ENCODE measurements at regions of chr4 and their contacts with region 1.

Region 1: GRCh38 chr4:153541456-153542096 is 75.4 kb downstream of the TMEM131L start:
- DNase-seq: peak; percentile 65
- ATAC-seq: peak; percentile 82
- H3K4me3 Mint-ChIP-seq: no peak overlapping the region
- H3K27ac Mint-ChIP-seq: no peak overlapping the region
- H3K4me1 Mint-ChIP-seq: peaks cover 28% of the 10 kb centered on the region
- H3K27me3 Mint-ChIP-seq: no peaks in the 10 kb centered on the region

Region 2: GRCh38 chr4:153023681-153024394 is 517.7 kb before region 1 on chr4:
- CTCF ChIA-PET with region 1: no interaction called
- DNase-seq: no peak
- ATAC-seq: no peak
- H3K4me3 Mint-ChIP-seq: no peak overlapping the region
- H3K27ac Mint-ChIP-seq: no peak overlapping the region
- H3K4me1 Mint-ChIP-seq: no peaks in the 10 kb centered on the region
- H3K27me3 Mint-ChIP-seq: peaks cover 2% of the 10 kb centered on the region

Region 3: GRCh38 chr4:153432968-153433753 is 108.4 kb before region 1 on chr4:
- CTCF ChIA-PET with region 1: interaction called, 11 read pairs
- DNase-seq: peak; percentile 93
- ATAC-seq: peak; percentile 93
- H3K4me3 Mint-ChIP-seq: peak overlapping the region; percentile 77
- H3K27ac Mint-ChIP-seq: peak overlapping the region; percentile 96
- H3K4me1 Mint-ChIP-seq: peaks cover 53% of the 10 kb centered on the region
- H3K27me3 Mint-ChIP-seq: peaks cover 6% of the 10 kb centered on the region